ENCODE measurements at regions of chr10 and their contacts with region 1.

Region 1: DNA sequence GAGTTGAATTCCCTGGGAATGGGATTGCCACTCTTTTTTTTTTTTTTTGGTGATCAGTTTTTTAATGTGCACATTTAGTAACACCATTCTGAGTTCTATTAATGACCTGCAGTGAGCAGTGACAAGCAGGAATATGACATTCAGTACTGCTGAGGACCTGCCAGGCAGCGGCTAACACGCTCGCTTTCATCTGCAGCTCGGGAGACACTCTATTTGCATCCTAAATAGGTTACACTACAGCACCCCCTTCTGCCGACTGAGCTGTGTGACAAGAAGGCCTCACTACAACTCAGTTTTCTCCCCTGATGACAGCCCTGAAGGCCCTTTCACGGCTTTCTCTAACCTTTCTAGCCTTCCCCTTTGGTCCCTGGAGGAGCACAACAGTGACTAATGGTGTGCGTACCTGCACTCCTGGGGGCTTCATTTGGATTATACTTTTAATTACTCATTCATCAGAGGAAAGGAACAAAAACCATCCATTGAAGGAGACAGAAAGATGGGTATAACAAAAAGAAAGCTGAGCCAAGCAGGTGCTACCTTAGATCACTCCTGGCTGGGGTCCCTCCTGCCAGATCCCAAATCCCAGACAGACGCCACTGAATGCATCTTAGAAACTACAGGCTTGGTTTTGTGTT is 872.4 kb downstream of the LRMDA start:
- DNase-seq: peak; percentile 98
- ATAC-seq: peak; percentile 98
- H3K4me3 ChIP-seq: no peak overlapping the region
- H3K27ac ChIP-seq: no peak overlapping the region
- H3K4me1 ChIP-seq: peaks cover 4% of the 10 kb centered on the region; the same call in 1 of the 2 replicates
- H3K27me3 ChIP-seq: peaks cover 13% of the 10 kb centered on the region; the same call in 1 of the 2 replicates
- CTCF ChIP-seq: peak; percentile 100

Region 2: GRCh38 chr10:75408911-75409885 is 894.6 kb before region 1 on chr10:
- CTCF ChIA-PET with region 1: interaction called, 12 read pairs
- POLR2A ChIA-PET with region 1: no interaction called
- intact Hi-C with region 1: no loop called
- DNase-seq: peak; percentile 91
- ATAC-seq: peak; percentile 51
- H3K4me3 ChIP-seq: peak overlapping the region; percentile 74
- H3K27ac ChIP-seq: peak overlapping the region; percentile 73
- H3K4me1 ChIP-seq: peaks cover 30% of the 10 kb centered on the region
- H3K27me3 ChIP-seq: peaks cover 88% of the 10 kb centered on the region
- CTCF ChIP-seq: peak; percentile 41

Region 3: GRCh38 chr10:75651417-75651816 is 652.4 kb before region 1 on chr10:
- CTCF ChIA-PET with region 1: no interaction called
- POLR2A ChIA-PET with region 1: no interaction called
- intact Hi-C with region 1: loop called (anchors 2 kb)
- DNase-seq: peak; percentile 64
- ATAC-seq: no peak
- H3K4me3 ChIP-seq: no peak overlapping the region
- H3K27ac ChIP-seq: no peak overlapping the region
- H3K4me1 ChIP-seq: peaks cover 48% of the 10 kb centered on the region
- H3K27me3 ChIP-seq: peaks cover 9% of the 10 kb centered on the region; the same call in 1 of the 2 replicates
- CTCF ChIP-seq: peak; percentile 71

Region 4: DNA sequence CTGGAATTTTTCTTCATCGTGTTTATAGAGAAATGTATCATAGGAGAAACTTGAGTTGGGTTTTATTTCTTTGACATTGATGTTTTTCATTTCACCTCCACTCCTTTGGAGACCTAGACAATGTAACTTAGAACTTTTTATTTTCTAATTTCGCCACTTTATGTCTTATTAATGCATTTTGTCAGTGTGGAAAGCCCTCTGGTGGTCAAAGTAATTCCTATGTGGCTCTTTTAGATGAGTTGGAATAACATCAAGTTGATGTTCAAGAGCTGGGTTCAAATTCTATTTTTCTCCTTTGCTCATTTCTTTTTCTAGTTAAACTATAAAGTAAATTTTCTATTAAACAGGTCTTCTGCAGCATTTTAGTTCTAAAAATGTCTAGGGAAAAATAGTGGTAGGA is 393.8 kb before region 1 on chr10:
- CTCF ChIA-PET with region 1: interaction called, 5 read pairs
- POLR2A ChIA-PET with region 1: no interaction called
- intact Hi-C with region 1: loop called (anchors 2 kb)
- DNase-seq: peak; percentile 90
- ATAC-seq: peak; percentile 36; the same call in 1 of the 2 replicates
- H3K4me3 ChIP-seq: no peak overlapping the region
- H3K27ac ChIP-seq: no peak overlapping the region
- H3K4me1 ChIP-seq: peaks cover 7% of the 10 kb centered on the region
- H3K27me3 ChIP-seq: peaks cover 74% of the 10 kb centered on the region
- CTCF ChIP-seq: no peak

Region 5: GRCh38 chr10:76113959-76114358 is 189.8 kb before region 1 on chr10:
- CTCF ChIA-PET with region 1: interaction called, 4 read pairs
- POLR2A ChIA-PET with region 1: no interaction called
- intact Hi-C with region 1: loop called (anchors 1 kb)
- DNase-seq: peak; percentile 98
- ATAC-seq: peak; percentile 76
- H3K4me3 ChIP-seq: peak overlapping the region; percentile 0; the same call in 1 of the 2 replicates
- H3K27ac ChIP-seq: peak overlapping the region; percentile 23
- H3K4me1 ChIP-seq: peaks cover 41% of the 10 kb centered on the region
- H3K27me3 ChIP-seq: peaks cover 51% of the 10 kb centered on the region
- CTCF ChIP-seq: no peak

Region 6: DNA sequence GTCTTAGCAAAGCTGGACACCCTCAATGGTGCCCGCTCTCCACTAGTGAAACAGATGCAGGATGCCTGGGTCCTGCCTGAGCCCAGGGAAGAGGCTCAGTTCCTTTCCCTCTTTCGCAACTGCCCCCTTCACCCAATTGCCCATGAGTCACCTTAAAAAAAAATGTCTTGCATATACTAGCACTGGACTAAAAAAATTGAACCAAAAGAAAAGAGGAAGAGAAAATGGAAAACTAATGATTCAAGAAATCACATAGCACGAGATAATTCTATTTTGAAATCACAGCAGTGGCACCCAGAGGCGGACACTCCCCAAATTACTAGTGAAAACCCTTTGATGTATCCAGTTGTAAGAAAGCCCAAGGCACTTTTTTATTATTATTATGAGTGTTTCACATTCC is 100.1 kb after region 1 on chr10:
- CTCF ChIA-PET with region 1: no interaction called
- POLR2A ChIA-PET with region 1: no interaction called
- intact Hi-C with region 1: no loop called
- DNase-seq: peak; percentile 74
- ATAC-seq: no peak
- H3K4me3 ChIP-seq: no peak overlapping the region
- H3K27ac ChIP-seq: no peak overlapping the region
- H3K4me1 ChIP-seq: no peaks in the 10 kb centered on the region
- H3K27me3 ChIP-seq: peaks cover 47% of the 10 kb centered on the region
- CTCF ChIP-seq: no peak

Region 7: DNA sequence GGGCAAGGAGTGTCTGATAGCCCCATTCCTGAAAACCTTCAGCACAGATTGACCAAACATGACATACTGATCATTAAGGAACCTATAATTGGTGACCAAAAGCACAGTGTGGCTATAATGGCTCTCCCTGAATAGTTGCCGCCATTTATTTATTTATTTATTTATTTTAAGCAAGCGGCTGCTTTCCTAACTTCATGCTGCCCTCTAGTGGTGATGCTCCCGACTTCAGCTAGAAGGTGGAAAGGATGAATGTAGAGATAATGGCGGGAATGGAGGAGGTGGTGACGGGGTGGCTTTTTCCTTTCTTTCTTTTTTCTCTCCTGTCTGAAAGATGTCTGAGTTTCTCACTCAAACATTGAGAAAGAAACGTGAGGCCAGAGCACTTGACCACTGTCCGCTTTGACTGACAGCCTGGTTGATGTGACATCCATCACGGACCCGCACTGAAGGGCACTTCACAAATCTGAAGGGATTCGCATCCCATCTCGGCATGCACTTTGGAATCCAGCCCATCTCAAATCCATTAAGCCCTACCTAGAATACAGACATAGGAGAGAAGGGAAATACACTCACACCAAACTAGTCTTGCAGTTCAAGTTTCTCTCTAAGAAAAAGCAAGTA is 243.7 kb after region 1 on chr10:
- CTCF ChIA-PET with region 1: interaction called, 8 read pairs
- POLR2A ChIA-PET with region 1: no interaction called
- intact Hi-C with region 1: loop called (anchors 2 kb)
- DNase-seq: peak; percentile 100
- ATAC-seq: peak; percentile 85
- H3K4me3 ChIP-seq: peak overlapping the region; percentile 44
- H3K27ac ChIP-seq: no peak overlapping the region
- H3K4me1 ChIP-seq: peaks cover 5% of the 10 kb centered on the region
- H3K27me3 ChIP-seq: peaks cover 26% of the 10 kb centered on the region
- CTCF ChIP-seq: peak; percentile 100

Region 8: DNA sequence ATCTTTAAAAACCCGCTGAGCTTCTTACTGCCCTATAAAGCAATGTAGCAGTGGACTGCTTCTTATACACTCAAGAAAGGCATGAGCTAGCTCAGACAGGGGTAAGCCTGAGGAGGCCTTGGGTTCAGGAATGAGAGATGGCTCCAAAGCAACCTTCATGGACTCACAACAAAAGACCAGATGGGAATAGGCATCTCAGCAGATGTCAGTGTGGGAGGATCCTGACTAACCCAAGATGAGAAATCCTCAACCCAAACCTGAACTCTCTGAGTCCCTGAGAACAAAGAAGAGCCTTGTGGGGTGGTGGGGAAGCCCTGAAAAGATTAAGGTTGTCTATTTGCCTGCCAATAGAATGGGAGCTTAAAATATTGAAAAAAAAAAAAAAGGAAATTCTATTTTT is 526.4 kb after region 1 on chr10:
- CTCF ChIA-PET with region 1: no interaction called
- POLR2A ChIA-PET with region 1: no interaction called
- intact Hi-C with region 1: no loop called
- DNase-seq: no peak
- ATAC-seq: no peak
- H3K4me3 ChIP-seq: no peak overlapping the region
- H3K27ac ChIP-seq: no peak overlapping the region
- H3K4me1 ChIP-seq: no peaks in the 10 kb centered on the region
- H3K27me3 ChIP-seq: peaks cover 89% of the 10 kb centered on the region
- CTCF ChIP-seq: no peak